Sigmoid colon (tissue), 7 donors: ENCODE measurements at regions of chr12 and their contacts with region 1.

Region 1: GRCh38 chr12:47779301-47779942 is 6.4 kb downstream of the SLC48A1 start:
- DNase-seq: peak; percentile 94
- H3K4me3 ChIP-seq: no peak overlapping the region
- H3K27ac ChIP-seq: peak overlapping the region in 3 of 4 donors; percentile 15 to 63 (median 57)
- H3K4me1 ChIP-seq: peaks cover 0 to 60% (median 48%) of the 10 kb centered on the region in 4 donors
- H3K27me3 ChIP-seq: no peaks in the 10 kb centered on the region
- CTCF ChIP-seq: peak; percentile 91 to 96 (median 93)
- EP300 ChIP-seq: no peak
- POLR2A ChIP-seq: no peak

Region 2: DNA sequence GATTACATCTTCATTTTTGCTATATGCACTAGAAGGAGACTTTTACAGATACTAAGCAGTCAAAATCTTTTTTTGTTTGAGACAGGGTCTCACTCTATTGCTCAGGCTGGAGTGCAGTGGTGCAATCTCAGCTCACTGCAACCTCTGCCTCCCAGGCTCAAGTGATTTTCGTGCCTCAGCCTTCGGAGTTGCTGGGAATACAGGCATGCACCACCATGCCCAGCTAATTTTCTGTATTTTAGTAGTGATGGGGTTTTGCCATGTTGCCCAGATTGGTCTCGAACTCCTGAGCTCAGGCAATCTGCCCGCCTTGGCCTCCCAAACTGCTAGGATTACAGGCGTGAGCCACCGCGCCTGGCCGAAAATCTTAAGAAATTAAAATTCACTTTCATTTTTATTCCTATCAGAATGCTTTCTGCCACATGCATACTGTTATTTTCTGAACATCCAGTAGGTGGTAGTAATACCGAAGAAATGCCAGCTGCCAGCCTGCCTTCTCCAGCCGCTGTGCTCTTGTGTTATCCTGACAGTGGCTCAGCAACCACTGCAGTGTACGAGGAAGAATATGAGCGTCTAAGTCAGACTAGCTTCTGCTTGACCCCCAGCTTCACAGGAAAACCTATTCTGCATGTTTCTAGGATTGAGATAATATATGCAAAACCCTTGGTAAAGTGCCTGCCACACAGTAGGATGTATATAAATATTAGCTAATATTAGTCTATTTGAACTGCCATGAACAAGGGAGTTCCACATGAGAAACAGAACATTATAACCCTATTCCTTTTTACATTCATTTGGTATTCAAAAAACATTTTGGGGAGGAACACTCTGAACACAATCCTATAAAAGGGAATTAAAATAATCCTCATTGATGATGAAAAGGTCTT is 127.8 kb before region 1 on chr12:
- intact Hi-C with region 1: loop called (anchors 5 kb)
- DNase-seq: peak; percentile 84
- H3K4me3 ChIP-seq: no peak overlapping the region
- H3K27ac ChIP-seq: peak overlapping the region in 3 of 4 donors; percentile 55 to 72 (median 71)
- H3K4me1 ChIP-seq: peaks cover 0 to 44% (median 31%) of the 10 kb centered on the region in 4 donors
- H3K27me3 ChIP-seq: no peaks in the 10 kb centered on the region
- CTCF ChIP-seq: peak; percentile 57 to 81 (median 71)
- EP300 ChIP-seq: no peak
- POLR2A ChIP-seq: no peak

Region 3: GRCh38 chr12:47742253-47742825 is 37.1 kb before region 1 on chr12:
- intact Hi-C with region 1: loop called (anchors 1 kb)
- DNase-seq: no peak
- H3K4me3 ChIP-seq: no peak overlapping the region
- H3K27ac ChIP-seq: no peak overlapping the region
- H3K4me1 ChIP-seq: peaks cover 0 to 23% (median 15%) of the 10 kb centered on the region in 4 donors
- H3K27me3 ChIP-seq: no peaks in the 10 kb centered on the region
- CTCF ChIP-seq: peak; percentile 91 to 98 (median 96)
- EP300 ChIP-seq: no peak
- POLR2A ChIP-seq: no peak

Region 4: GRCh38 chr12:48054955-48055821 is 275.8 kb after region 1 on chr12:
- intact Hi-C with region 1: no loop called
- DNase-seq: no peak
- H3K4me3 ChIP-seq: no peak overlapping the region
- H3K27ac ChIP-seq: no peak overlapping the region
- H3K4me1 ChIP-seq: no peaks in the 10 kb centered on the region
- H3K27me3 ChIP-seq: no peaks in the 10 kb centered on the region
- CTCF ChIP-seq: no peak
- EP300 ChIP-seq: no peak
- POLR2A ChIP-seq: no peak

Region 5: GRCh38 chr12:48131517-48131916 is 352.1 kb after region 1 on chr12:
- intact Hi-C with region 1: no loop called
- DNase-seq: no peak
- H3K4me3 ChIP-seq: no peak overlapping the region
- H3K27ac ChIP-seq: no peak overlapping the region
- H3K4me1 ChIP-seq: no peaks in the 10 kb centered on the region
- H3K27me3 ChIP-seq: no peaks in the 10 kb centered on the region
- CTCF ChIP-seq: no peak
- EP300 ChIP-seq: no peak
- POLR2A ChIP-seq: no peak